Heart left ventricle (tissue), 16 donors: ENCODE measurements at regions of chr9 and their contacts with region 1.

Region 1: DNA sequence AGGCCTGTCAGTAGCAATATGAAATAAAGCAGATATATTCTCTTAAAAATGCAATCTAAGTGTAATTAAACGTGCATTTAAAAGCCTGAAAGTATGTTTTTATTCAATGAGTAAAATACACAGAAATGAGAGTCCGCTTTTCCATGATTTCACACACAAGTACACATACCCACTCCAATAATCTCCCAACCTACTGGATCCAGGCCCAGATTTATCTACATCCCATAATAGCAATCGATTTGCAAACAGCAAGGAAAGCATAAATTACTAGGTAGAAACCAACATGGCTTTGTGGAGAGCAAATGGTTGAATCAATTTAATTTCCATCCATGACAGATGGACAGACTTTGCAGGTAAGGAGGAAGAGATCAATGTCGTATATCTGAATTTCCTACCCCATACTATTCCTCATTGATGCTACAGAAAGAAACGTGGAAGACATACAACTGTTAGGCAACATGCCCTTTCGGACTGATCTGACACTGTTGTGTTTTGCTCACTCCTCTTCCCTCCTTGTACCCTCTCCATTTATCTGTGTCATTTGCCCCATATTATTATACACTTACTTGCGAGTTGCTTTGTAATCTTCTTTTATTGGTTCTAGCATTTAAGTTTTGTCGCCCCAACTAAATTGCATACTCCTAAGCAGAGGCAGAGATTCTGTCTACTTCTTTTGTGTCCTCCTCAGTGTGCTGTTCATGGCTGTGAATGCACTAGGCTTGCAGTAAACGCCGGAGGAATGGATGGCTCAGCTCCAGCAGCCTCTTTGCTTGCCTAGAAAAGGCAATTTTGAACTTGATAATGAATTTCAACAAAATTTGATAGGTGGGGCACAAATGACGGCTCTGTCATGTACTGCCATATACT is 133.6 kb downstream of the NFIB start:
- DNase-seq: peak in 4 of 5 donors; percentile 33 to 41 (median 36)
- ATAC-seq: peak; percentile 21 to 69 (median 66)
- H3K4me3 ChIP-seq: peak overlapping the region in 9 of 12 donors; percentile 3 to 42 (median 20)
- H3K27ac ChIP-seq: peak overlapping the region; percentile 7 to 73 (median 59)
- H3K4me1 ChIP-seq: peaks cover 3 to 67% (median 41%) of the 10 kb centered on the region in 12 donors
- H3K27me3 ChIP-seq: no peaks in the 10 kb centered on the region
- CTCF ChIP-seq: no peak
- POLR2A ChIP-seq: no peak

Region 2: GRCh38 chr9:14238552-14238951 is 58.2 kb after region 1 on chr9:
- intact Hi-C with region 1: loop called in 1 of 10 experiments (anchors 10 kb)
- DNase-seq: no peak
- ATAC-seq: peak; percentile 47 to 90 (median 72)
- H3K4me3 ChIP-seq: no peak overlapping the region
- H3K27ac ChIP-seq: peak overlapping the region in 11 of 12 donors; percentile 34 to 81 (median 72)
- H3K4me1 ChIP-seq: peaks cover 18 to 91% (median 67%) of the 10 kb centered on the region in 12 donors
- H3K27me3 ChIP-seq: no peaks in the 10 kb centered on the region
- CTCF ChIP-seq: no peak
- POLR2A ChIP-seq: no peak